ENCODE measurements at regions of chr1 and their contacts with region 1.

Region 1: GRCh38 chr1:9724706-9725476 is 73.4 kb downstream of the PIK3CD start:
- DNase-seq: peak; percentile 78
- H3K4me3 Mint-ChIP-seq: no peak overlapping the region
- H3K27ac Mint-ChIP-seq: no peak overlapping the region
- H3K4me1 Mint-ChIP-seq: peaks cover 64% of the 10 kb centered on the region
- H3K27me3 Mint-ChIP-seq: no peaks in the 10 kb centered on the region

Region 2: GRCh38 chr1:9588551-9589143 is 136.2 kb before region 1 on chr1 and contains the start of gene TMEM201:
- CTCF ChIA-PET with region 1: interaction called, 4 read pairs
- intact Hi-C with region 1: loop called (anchors 2 kb)
- DNase-seq: peak; percentile 92
- H3K4me3 Mint-ChIP-seq: peak within 1 kb of the TSS; percentile 78
- H3K27ac Mint-ChIP-seq: no peak within 1 kb of the TSS
- H3K4me1 Mint-ChIP-seq: peaks cover 38% of the 10 kb centered on the region
- H3K27me3 Mint-ChIP-seq: no peaks in the 10 kb centered on the region
- total RNA-seq, gene TMEM201: 9.1 to 9.8 TPM

Region 3: GRCh38 chr1:9651565-9652378 is 73.1 kb before region 1 on chr1 and contains the start of gene PIK3CD:
- CTCF ChIA-PET with region 1: interaction called, 5 read pairs
- intact Hi-C with region 1: loop called (anchors 1 kb)
- DNase-seq: peak; percentile 63
- H3K4me3 Mint-ChIP-seq: peak within 1 kb of the TSS; percentile 99
- H3K27ac Mint-ChIP-seq: peak within 1 kb of the TSS; percentile 100
- H3K4me1 Mint-ChIP-seq: peaks cover 46% of the 10 kb centered on the region
- H3K27me3 Mint-ChIP-seq: no peaks in the 10 kb centered on the region
- total RNA-seq, gene PIK3CD: 96.6 to 101 TPM

Region 4: GRCh38 chr1:9689011-9689706 is 35.7 kb before region 1 on chr1:
- CTCF ChIA-PET with region 1: interaction called, 14 read pairs
- intact Hi-C with region 1: no loop called
- DNase-seq: peak; percentile 83
- H3K4me3 Mint-ChIP-seq: peak overlapping the region; percentile 67
- H3K27ac Mint-ChIP-seq: peak overlapping the region; percentile 46
- H3K4me1 Mint-ChIP-seq: peaks cover 69% of the 10 kb centered on the region
- H3K27me3 Mint-ChIP-seq: no peaks in the 10 kb centered on the region

Region 5: DNA sequence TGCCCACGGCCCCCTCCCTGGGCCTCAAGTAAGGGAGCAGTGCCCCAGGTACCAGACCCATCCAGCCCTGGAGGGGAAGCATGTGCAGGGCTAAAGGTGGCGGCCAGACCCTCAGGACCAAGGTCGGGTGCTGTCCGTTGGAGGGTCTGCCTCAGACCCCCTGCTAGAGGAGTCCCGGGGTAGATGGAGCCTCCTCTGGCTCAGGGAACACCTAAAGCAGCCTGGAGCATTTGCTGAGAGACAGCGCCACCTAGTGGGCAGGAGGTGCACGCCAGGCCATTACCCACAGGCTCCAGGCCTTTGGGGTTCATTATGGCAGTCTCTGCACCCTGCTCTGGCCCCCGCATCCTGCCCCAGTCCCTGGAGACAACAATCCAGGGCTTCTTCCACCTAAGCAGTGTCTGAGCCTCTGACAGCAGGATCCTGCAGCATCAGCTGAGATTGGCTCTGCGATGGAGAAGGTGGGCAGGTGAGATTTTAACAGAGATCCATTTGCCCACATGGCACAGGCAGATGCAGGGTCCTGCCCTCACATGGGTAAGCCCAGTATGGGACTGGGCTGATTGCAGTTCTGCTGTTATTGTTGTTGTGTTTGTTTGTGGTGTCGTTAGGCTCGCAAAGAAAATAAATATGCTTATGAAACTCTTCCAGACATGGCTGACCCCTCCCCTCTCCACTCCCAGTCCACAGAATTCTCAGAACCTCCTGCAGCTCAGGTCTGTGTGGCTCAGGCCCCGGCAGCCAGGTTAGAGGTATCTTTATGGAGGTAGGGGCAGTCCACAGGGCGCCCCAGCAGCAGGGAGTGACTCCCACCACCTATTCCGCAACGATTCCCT is 142.7 kb after region 1 on chr1:
- CTCF ChIA-PET with region 1: interaction called, 6 read pairs
- intact Hi-C with region 1: loop called (anchors 2 kb)
- DNase-seq: peak; percentile 95
- H3K4me3 Mint-ChIP-seq: no peak overlapping the region
- H3K27ac Mint-ChIP-seq: no peak overlapping the region
- H3K4me1 Mint-ChIP-seq: no peaks in the 10 kb centered on the region
- H3K27me3 Mint-ChIP-seq: no peaks in the 10 kb centered on the region

Region 6: DNA sequence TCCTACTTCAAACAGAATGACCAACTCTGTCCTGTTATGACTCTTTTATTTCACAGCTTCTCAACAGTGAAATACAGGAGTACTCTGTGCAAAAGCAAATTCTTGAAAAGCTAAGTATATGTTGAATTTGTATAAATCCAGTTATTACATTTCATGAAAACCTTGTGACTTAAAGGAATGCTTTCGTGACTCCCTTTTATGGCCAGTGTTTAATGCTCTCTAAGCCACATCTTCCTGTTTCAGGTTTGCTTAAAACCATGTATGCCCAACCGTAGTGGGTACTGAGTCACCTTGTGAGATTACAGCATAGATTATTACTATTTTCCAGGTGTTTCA is 445.3 kb after region 1 on chr1:
- CTCF ChIA-PET with region 1: no interaction called
- intact Hi-C with region 1: loop called (anchors 1 kb)
- DNase-seq: peak; percentile 48
- H3K4me3 Mint-ChIP-seq: no peak overlapping the region
- H3K27ac Mint-ChIP-seq: peak overlapping the region; percentile 87
- H3K4me1 Mint-ChIP-seq: peaks cover 40% of the 10 kb centered on the region
- H3K27me3 Mint-ChIP-seq: no peaks in the 10 kb centered on the region